Activated B cell treated with CpG ODN at 0.5 μM for 24 hours (primary cell): ENCODE measurements at regions of chr15 and their contacts with region 1.

Region 1: DNA sequence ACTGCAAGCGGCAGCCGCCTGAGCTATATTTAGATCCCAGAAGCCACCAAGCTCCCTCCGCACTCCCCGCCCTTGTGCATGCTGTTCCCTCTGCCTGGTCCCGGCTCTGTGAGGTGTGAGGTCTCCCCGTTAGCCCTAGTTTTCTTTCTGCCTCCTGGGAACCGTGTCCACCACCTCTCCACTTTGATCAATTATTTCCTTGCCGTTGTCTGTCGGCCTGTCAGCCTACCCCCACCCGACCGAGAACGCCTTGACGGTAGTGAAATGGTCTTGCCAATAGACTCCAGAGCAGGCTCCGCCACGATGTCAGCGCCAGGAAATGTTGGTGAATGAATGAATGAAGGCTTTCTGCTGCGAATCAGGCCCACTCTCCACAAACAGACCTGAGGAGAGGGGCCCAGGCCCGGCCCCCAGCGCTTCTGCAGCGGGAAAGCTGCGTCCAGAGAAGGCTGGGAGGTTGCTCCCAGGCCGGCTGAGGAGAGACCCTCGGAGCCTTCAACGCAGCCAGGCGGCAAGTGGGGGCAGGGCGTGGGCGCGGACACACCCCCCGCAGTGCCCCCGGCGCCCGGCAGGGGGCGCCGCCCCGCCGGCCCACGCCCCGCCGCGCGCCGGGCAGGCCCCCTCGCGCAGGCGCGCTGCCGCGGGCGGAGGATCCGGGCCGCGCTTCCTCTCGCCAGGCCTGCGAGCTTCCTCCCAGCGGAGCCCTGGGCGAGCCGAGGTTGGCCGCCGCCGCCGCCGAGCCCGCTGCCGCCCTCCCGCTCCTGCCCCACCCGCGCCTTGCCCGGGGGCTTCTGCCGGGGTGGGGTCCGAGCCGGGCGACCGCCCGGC is at the start of gene CSK:
- DNase-seq: peak; percentile 90
- ATAC-seq: peak; percentile 42
- H3K4me3 Mint-ChIP-seq: peak within 1 kb of the TSS; percentile 94
- H3K27ac Mint-ChIP-seq: peak within 1 kb of the TSS; percentile 99
- H3K4me1 Mint-ChIP-seq: peaks cover 81% of the 10 kb centered on the region
- H3K27me3 Mint-ChIP-seq: no peaks in the 10 kb centered on the region
- CTCF ChIP-seq: no peak
- total RNA-seq, gene CSK: 540 and 557 TPM in 2 replicates

Region 2: DNA sequence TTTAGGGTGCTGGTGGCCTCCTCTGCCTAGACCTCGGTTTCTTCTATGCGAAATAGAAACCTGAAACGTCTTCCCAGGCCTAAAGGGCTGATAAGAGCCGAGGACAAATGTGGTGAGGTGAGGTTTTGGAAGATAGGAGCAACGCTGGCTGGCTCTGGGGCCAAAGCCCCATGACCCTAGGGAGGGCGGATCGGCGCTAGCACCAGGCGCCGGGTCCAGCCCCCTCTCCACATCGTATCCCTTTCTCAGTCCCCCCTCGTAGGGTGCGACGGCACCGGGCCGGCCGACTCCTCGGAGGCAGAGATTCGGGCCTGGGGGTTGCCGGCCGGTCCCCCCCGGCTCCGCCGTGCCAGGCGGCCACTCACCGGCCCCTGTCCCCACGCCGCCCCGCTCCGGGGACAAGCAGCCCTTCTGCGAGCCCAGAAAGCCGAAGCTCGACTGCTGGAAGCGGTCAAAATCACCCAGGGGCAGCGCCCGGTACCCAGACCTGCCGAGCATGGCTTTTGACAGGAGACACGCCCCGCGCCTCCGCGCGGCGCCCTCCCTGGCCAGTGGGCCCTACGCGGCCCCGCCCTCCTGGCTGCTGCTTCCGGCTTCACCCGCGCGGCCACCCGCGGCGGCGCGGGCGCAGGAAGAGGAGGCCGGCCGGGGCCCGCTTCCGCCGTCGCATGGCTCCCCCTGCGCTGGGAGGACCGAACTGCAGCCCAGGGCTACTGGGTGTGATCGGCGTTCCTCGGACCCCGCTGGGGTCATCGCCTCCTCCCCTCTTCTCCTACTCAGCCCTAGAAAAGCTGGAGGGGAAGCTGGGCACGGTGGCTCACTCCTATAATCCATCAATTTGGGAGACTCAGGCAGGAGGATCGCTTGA is 789.7 kb before region 1 on chr15 and contains the start of gene STOML1:
- CTCF ChIA-PET with region 1: no interaction called
- POLR2A ChIA-PET with region 1: no interaction called
- intact Hi-C with region 1: loop called (anchors 5 kb)
- DNase-seq: peak; percentile 98
- ATAC-seq: peak; percentile 77
- H3K4me3 Mint-ChIP-seq: peak within 1 kb of the TSS; percentile 86
- H3K27ac Mint-ChIP-seq: peak within 1 kb of the TSS; percentile 69
- H3K4me1 Mint-ChIP-seq: peaks cover 66% of the 10 kb centered on the region
- H3K27me3 Mint-ChIP-seq: no peaks in the 10 kb centered on the region
- CTCF ChIP-seq: no peak
- total RNA-seq, gene STOML1: 8.9 and 10.6 TPM in 2 replicates

Region 3: DNA sequence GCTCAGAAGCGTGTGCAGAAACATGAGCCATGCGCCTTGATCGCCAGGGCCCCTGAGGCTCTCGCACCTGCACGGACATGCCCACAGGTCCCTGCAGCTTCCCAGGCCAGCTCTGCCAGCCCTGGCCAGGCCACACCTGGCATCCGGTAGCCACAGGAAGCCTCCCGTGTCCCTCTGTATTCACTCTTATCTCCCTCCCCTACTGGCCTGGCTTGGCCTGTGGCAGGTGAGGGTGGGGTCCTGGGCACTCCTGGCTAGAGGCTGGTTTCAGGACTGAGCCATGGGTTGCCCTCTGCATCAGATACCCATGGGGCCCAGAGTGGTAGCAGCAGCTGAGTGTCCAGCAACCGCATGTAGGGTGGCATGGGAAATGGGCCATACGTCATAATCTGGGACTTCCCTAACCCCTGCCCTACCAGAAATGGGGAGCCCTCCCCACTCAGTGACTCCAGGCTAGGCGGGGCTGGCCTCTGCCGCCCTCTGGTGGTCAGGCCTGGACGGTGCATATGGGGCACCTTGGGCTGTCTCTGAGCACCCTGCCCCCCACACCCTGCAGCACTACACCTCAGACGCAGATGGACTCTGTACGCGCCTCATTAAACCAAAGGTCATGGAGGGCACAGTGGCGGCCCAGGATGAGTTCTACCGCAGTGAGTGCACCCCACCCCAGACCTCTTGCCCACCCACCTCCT is 18.4 kb after region 1 on chr15:
- CTCF ChIA-PET with region 1: interaction called, 1,146 read pairs
- POLR2A ChIA-PET with region 1: interaction called, 2,569 read pairs
- intact Hi-C with region 1: loop called (anchors 1 kb)
- DNase-seq: peak; percentile 88
- ATAC-seq: peak; percentile 89
- H3K4me3 Mint-ChIP-seq: peak overlapping the region; percentile 41
- H3K27ac Mint-ChIP-seq: peak overlapping the region; percentile 89
- H3K4me1 Mint-ChIP-seq: peaks cover 64% of the 10 kb centered on the region
- H3K27me3 Mint-ChIP-seq: no peaks in the 10 kb centered on the region
- CTCF ChIP-seq: peak; percentile 67

Region 4: GRCh38 chr15:74821091-74821789 is 39.6 kb after region 1 on chr15:
- CTCF ChIA-PET with region 1: interaction called, 4 read pairs
- POLR2A ChIA-PET with region 1: interaction called, 13 read pairs
- intact Hi-C with region 1: no loop called
- DNase-seq: peak; percentile 47
- ATAC-seq: peak; percentile 92
- H3K4me3 Mint-ChIP-seq: peak overlapping the region; percentile 63
- H3K27ac Mint-ChIP-seq: peak overlapping the region; percentile 31
- H3K4me1 Mint-ChIP-seq: peaks cover 43% of the 10 kb centered on the region
- H3K27me3 Mint-ChIP-seq: no peaks in the 10 kb centered on the region
- CTCF ChIP-seq: no peak

Region 5: DNA sequence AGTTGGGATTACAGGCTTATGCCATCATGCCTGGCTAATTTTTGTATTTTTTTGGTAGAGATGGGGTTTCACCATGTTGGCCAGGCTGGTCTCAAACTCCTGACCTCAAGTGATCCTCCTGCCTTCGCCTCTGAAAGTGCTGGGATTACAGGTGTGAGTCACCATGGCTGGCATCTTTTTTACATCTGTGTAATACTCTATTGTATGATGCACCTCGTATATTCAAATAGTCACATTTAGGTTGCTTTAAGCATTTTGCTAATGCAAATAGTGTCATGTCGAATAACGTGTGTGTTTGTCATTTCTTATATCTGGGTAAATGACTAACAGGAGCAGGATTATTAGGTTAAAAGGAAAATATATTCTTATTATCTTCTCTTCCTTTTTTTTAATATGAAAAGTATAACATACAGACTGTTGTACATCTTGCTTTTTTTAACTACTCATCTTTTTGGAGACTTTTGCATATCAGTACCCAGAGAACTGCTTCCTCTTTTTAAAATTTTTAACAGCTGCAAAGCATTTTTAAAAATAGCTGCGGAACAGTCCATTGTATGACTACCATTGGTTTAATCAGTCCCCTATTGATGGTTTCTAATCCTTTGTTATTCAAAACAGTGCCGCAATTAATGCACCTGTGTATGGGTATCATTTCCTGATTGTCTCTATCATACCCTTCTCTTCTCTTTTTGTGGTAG is 227.1 kb after region 1 on chr15:
- CTCF ChIA-PET with region 1: no interaction called
- POLR2A ChIA-PET with region 1: no interaction called
- intact Hi-C with region 1: loop called (anchors 5 kb)
- DNase-seq: no peak
- ATAC-seq: peak; percentile 85
- H3K4me3 Mint-ChIP-seq: peak overlapping the region; percentile 56
- H3K27ac Mint-ChIP-seq: peak overlapping the region; percentile 86
- H3K4me1 Mint-ChIP-seq: peaks cover 44% of the 10 kb centered on the region
- H3K27me3 Mint-ChIP-seq: peaks cover 20% of the 10 kb centered on the region
- CTCF ChIP-seq: no peak

Region 6: DNA sequence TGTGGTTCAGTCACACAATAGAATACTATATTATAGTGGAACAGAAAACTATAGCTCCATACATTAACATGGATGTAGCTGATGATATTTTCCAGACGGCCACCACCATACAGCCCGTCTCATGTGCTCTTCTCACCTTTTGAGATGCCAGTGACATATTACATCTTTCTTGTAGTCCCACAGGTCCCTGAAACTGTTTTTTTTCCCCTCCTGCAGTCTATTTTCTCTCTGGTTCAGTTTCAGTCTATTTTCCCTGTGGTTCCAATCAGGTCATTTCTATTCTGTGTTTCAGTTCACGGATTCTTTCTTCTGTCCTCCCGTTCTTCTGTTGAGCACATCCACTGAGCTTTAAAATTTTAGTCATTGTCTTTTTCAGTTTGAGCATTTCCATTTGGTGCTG is 313.9 kb after region 1 on chr15:
- CTCF ChIA-PET with region 1: no interaction called
- POLR2A ChIA-PET with region 1: no interaction called
- intact Hi-C with region 1: no loop called
- DNase-seq: no peak
- ATAC-seq: peak; percentile 9
- H3K4me3 Mint-ChIP-seq: peak overlapping the region; percentile 50
- H3K27ac Mint-ChIP-seq: peak overlapping the region; percentile 73
- H3K4me1 Mint-ChIP-seq: peaks cover 36% of the 10 kb centered on the region
- H3K27me3 Mint-ChIP-seq: peaks cover 13% of the 10 kb centered on the region
- CTCF ChIP-seq: no peak